ENCODE measurements at regions of chr20 and their contacts with region 1.

Region 1: GRCh38 chr20:45095753-45096371 is 5.1 kb downstream of the KCNS1 start:
- DNase-seq: peak; percentile 69
- CTCF ChIP-seq: peak; percentile 77

Region 2: DNA sequence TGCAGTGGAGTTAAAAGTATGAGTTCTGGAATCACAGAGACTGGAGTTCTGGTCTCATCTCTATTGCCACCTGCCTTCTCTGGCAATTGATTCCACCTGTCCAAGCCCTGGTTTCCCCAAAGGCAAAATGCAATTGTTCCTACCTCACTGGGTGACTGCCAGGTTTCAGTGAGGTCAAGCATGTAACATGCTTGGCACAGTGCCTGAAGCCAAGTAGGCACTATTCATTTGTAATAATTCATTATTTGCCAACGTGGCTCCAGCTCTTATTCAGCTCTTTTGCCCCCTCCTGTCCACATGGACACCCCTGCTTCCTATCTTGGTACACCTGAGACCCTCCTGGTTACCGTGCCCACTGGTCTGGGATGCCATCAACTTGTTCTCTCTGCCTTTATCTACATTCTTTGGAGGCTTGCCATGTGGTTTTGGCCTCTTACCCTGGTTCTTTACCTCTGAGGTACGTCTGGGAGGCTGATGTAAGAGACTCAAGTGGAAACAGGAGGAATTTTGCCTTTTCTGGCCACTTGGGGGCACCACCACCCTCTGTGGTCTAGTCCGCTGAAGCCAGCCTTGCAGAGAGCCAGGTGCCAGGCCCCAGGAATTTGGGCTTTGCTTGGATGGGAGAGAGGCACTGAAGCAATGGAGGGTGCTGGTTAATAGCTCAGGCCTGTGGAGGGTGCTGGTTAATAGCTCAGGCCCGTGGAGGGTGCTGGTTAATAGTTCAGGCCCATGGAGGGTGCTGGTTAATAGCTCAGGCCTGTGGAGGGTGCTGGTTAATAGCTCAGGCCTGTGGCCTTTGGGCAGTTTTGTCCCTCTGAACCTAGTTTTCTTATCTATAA is 348.5 kb before region 1 on chr20:
- CTCF ChIA-PET with region 1: interaction called, 12 read pairs
- POLR2A ChIA-PET with region 1: no interaction called
- DNase-seq: peak; percentile 76
- CTCF ChIP-seq: peak; percentile 76

Region 3: DNA sequence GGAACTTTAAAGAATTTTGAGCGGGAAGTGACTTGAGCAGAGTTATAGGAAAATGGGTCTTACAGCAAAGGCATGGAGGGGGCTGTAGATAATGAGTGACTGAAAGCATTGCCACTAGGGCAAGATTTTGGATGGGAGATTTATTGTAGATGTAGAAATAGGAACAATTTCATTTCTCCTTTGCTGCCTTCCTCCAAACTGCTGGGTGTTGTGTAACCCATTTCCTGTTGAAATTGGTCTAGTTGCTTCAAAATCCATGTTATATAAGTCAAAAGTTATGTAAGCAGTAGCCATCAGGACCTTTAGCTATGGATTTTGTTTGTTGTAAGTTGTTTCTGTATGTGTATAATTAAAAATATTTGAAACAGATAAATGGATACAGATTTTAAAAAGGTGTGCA is 199.3 kb before region 1 on chr20:
- CTCF ChIA-PET with region 1: no interaction called
- POLR2A ChIA-PET with region 1: no interaction called
- DNase-seq: no peak
- CTCF ChIP-seq: no peak

Region 4: DNA sequence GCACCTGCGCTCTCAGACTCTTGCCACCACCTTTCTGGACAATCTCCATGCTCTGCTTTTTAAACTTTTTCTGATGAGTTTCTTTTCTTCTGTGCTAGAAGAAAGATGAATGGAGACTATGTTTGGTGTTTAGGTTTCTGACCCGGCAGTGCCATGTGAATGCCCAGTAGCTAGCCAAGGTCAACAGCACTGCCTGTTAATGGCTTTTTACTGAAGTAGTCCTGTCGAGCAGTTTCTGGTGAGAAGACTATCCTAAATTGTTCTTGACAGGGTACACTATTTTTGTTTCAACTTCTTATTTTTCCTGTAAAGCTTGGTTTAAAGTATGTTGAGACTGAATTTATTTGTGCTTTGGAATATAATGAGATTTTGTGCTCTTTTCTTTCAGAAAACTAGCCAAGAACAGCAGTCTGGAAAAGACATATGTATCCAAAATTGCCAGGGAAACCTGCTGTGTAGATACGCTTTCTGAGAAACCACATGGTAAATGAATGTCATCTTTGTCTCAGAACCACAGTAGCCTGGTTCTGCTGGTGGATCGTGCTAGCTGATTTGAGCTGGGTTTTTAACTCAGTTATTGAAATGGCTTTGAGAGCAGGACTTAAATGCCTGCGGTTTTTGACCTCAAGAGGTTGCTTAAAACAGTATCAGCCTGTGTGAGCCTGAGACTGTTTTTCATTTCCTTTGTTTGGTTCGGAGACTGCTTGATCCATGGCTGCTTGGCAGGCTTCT is 43.0 kb before region 1 on chr20:
- CTCF ChIA-PET with region 1: interaction called, 24 read pairs
- POLR2A ChIA-PET with region 1: no interaction called
- DNase-seq: peak; percentile 27
- CTCF ChIP-seq: no peak

Region 5: DNA sequence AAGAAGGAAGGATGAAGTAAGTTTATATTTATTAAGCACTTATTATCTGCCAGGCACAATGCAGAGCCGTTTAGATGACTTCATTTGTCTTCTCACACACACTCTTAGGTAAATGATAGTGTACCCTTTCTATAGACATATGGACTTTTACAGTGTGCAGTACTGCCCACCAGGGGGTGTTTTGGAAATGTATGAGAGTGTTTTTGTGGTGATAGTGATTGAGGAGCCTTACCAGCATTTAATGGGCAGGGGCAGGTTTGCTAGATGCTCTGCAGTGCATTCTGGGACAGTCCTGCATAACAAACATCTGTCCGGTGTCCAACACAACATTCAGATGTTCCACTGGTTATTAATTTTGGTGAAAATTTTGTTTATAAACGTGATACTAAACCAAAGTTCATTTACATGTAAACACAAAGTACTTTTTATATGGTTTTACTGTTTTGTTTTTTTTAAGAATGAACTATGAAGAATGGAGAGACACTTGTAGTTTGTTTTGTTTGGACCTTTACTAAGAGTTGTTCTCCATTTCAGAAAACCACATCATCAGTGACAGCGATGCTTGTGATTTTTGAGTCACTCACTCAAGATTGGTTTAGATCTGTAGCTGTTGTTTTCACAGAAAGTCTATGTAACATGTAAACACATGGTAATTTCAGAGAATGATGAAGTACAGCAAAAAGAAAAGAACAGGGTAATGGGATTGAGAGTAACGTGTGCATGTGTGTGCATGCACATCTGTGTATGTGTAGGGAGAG is 14.8 kb before region 1 on chr20:
- CTCF ChIA-PET with region 1: interaction called, 29 read pairs
- POLR2A ChIA-PET with region 1: no interaction called
- DNase-seq: no peak
- CTCF ChIP-seq: no peak

Region 6: DNA sequence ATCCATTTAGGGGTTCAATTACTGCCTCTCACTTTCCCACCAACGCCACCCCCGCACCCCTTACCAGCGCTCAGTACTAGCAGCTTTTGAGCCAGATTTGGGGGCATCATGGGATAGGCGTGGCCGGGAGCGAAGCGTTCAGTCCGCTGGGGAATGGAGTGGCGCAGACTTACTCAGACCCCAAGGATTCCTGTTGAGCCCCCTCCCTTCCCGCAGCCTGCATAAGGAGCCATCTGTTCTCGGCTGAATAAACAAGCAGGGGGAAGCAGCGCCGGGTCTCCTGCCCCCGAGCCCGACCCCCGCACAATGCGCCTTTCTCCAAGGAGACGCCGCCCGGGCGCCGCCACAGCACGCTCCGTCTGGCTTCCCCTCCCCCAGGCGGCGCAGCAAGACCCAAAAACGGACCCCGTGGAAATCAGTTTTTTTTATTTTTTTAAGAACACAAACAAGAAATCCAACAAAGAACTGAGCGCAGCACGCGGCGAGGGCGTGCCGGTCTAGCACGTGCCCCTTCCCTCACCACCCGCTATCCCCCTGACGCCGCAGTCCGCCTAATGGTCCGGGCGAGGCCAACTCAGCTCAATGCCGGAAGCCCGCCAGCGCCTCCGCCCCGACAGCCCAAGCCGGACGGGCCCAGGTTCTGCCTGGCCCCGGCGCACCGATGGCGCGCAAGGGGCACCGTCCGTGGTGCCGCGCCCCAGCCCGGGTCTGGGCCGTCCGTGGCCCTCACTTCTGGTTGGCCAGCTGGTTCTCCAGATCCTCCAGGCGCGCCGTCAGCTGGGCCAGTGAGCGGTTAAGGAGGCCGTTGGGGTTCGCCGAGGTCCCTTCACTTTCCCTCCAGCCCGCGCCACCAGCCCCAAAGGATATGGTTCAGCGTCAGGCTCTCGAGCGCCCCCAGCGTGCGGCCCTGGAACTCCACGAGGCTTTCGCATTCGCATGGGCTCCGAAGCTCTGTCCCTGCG is 197.5 kb after region 1 on chr20:
- CTCF ChIA-PET with region 1: interaction called, 70 read pairs
- POLR2A ChIA-PET with region 1: no interaction called
- DNase-seq: peak; percentile 83
- CTCF ChIP-seq: peak; percentile 90